Activated T-helper 1 cell treated with anti-CD3 and anti-CD28 coated beads, Interleukin-12 subunit alpha, Interleukin-12 subunit beta, Interleukin-2, Interleukin-4 antibody, amounts not matched to agents 30 ng/mL and 10 ng/mL and 1 ng/mL, durations not matched to agents 14 hours and 24 hours and 36 hours (primary cell): ENCODE measurements at regions of chr15 and their contacts with region 1.

Region 1: DNA sequence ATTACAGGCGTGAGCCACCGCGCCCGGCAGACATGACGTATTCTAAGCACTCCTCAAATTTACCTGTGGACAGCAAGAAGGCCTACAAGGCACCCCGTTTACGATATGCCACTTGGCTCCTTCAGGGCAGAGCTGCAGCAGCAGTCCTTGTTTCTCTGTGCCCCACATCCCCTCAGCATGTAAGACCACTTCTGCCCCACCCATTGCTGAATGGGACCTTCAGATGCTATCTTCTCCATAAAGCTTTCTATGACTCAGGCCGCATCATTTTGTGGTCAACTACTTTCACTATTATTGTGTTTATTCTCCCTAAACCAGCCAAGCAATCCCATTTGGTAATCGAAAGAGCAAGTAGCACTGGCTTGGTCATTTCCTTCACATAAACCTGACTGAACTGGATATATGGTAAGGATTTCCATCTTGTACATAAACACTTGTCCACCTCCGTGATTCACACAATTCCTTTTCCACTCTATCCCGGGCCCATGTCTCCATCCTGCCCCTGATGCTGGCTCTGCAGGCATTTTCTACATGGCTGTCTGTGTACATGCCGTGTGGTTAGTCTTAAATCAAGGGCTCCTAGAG is 25.7 kb downstream of the LIPC start:
- DNase-seq: peak; percentile 26
- H3K4me3 Mint-ChIP-seq: peak overlapping the region; percentile 29
- H3K27ac Mint-ChIP-seq: peak overlapping the region; percentile 84
- H3K4me1 Mint-ChIP-seq: peaks cover 87% of the 10 kb centered on the region
- H3K27me3 Mint-ChIP-seq: no peaks in the 10 kb centered on the region

Region 2: GRCh38 chr15:58269455-58270414 is 187.7 kb before region 1 on chr15:
- intact Hi-C with region 1: loop called (anchors 1 kb)
- DNase-seq: peak; percentile 28
- H3K4me3 Mint-ChIP-seq: peak overlapping the region; percentile 6
- H3K27ac Mint-ChIP-seq: peak overlapping the region; percentile 6
- H3K4me1 Mint-ChIP-seq: peaks cover 16% of the 10 kb centered on the region
- H3K27me3 Mint-ChIP-seq: peaks cover 5% of the 10 kb centered on the region

Region 3: GRCh38 chr15:58314593-58315216 is 142.8 kb before region 1 on chr15:
- intact Hi-C with region 1: no loop called
- DNase-seq: no peak
- H3K4me3 Mint-ChIP-seq: no peak overlapping the region
- H3K27ac Mint-ChIP-seq: peak overlapping the region; percentile 80
- H3K4me1 Mint-ChIP-seq: peaks cover 23% of the 10 kb centered on the region
- H3K27me3 Mint-ChIP-seq: no peaks in the 10 kb centered on the region

Region 4: GRCh38 chr15:58410353-58410752 is 47.1 kb before region 1 on chr15:
- intact Hi-C with region 1: loop called (anchors 5 kb)
- DNase-seq: peak; percentile 17
- H3K4me3 Mint-ChIP-seq: peak overlapping the region; percentile 85
- H3K27ac Mint-ChIP-seq: peak overlapping the region; percentile 90
- H3K4me1 Mint-ChIP-seq: peaks cover 28% of the 10 kb centered on the region
- H3K27me3 Mint-ChIP-seq: no peaks in the 10 kb centered on the region

Region 5: GRCh38 chr15:58440158-58440910 is 17.1 kb before region 1 on chr15:
- intact Hi-C with region 1: no loop called
- DNase-seq: no peak
- H3K4me3 Mint-ChIP-seq: no peak overlapping the region
- H3K27ac Mint-ChIP-seq: peak overlapping the region; percentile 63
- H3K4me1 Mint-ChIP-seq: peaks cover 44% of the 10 kb centered on the region
- H3K27me3 Mint-ChIP-seq: no peaks in the 10 kb centered on the region

Region 6: DNA sequence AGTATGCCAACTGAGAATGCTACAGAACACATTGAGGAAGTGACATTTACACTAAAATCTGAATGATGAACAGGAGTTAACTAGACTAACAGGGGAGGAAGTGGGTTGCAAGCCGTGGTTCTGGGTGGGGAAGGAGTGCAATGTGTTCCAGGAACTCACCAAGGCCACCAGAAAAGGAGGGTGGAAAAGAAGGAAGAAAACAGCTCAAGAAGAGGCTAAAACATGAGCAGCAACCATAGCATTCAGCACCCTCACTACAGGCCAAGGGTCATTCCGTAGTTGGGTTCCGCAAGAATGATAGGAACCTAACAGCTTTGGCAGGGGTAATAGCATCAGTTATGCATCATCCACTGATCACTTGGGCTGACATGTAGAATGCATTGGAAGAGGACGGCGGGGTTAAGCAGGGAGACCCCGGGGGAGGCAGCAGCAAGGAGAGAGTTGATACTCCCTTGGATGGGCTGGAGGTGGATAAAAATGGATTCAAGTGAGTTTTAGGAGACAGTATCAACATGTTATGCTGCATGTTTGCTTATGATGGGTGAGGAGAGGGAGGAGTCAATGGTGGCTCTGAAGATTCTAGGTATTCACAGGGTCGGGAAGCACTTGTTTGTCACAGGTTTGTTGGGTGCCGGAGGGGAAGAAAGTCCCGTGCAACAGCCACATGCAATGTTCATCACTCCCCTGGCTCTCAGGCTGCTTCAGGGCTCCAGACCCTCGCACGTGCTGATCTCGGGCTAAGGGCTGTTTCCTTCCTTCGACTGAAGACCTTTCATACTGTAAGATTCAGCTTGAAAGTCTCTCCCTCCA is 27.5 kb after region 1 on chr15:
- intact Hi-C with region 1: loop called (anchors 5 kb)
- DNase-seq: peak; percentile 55
- H3K4me3 Mint-ChIP-seq: peak overlapping the region; percentile 56
- H3K27ac Mint-ChIP-seq: peak overlapping the region; percentile 99
- H3K4me1 Mint-ChIP-seq: peaks cover 51% of the 10 kb centered on the region
- H3K27me3 Mint-ChIP-seq: no peaks in the 10 kb centered on the region

Region 7: DNA sequence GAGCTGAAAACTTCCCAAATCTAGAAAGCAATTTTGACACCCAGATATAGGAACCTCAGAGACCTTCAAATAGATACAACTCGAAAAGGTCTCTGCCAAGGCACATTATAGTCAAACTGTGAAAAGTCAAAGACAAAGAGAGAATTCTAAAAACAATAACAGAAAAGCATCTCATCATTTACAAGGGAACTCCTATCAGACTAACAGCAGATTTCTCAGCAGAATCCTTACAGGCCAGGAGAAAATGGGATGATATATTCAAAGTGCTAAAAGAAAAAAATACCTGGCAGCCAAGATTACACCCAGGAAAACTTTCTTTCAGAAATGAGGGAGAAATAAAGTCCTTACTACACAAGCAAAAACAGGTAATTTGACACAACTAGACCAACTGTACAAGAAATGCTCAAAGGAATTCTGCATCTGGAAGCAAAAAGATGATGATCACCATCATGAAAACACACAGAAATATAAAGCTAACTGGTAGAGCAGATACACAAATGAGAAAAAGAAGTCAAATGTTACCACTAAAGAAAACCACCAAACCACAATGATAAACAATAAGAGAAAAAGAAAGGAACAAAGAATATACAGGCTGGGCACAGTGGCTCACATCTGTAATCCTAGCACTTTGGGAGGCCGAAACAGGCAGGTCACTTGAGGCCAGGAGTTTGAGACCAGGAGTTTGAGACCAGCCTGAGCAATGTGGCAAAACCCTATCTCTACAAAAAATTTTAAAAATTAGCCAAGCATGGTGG is 241.6 kb after region 1 on chr15:
- intact Hi-C with region 1: loop called (anchors 1 kb)
- DNase-seq: no peak
- H3K4me3 Mint-ChIP-seq: peak overlapping the region; percentile 8
- H3K27ac Mint-ChIP-seq: peak overlapping the region; percentile 85
- H3K4me1 Mint-ChIP-seq: peaks cover 57% of the 10 kb centered on the region
- H3K27me3 Mint-ChIP-seq: no peaks in the 10 kb centered on the region